Posterior vena cava (tissue), 2 donors: ENCODE measurements at regions of chr7 and their contacts with region 1.

Region 1: DNA sequence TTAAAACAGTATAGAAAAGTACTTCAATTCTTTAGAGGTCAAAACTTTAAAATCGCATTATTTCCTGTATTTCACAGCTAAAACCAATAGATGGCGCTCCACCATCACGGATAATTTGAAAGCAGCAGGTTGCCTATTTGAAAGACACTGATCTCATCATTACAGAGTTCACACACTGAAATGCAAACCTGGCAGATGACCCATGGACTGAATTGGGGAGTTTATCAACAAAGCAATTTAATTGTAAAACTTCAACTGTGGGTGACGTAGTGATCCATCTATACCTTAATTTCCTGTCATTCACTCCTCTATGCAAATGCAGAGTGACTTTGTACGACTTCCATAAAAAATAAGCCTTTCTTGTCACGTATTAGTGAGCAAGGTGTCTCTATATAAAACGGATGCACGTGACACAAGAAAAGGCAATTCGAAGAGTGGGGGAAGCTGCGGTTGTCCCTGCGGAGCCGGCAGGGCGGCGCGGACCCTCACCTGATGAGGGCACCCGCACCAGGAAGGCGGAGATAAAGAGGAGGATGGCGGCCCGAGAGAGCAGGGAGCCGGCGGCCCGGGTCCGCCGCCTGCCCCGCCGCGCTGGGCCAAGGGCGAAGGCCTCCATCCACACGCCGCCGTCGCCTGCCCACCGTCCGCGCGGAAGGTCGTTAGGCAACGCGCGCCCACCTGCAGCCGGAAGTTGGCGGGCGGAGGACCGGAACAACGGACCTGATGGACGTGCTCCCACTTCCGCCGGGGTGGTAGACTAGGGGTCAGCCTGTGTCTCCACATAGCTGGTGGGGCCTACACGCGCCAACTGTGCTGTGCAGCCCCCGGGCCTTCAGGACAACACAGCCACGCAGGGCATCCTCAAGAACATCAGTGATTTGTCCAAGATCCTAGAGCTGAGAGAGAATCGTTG is at the start of gene ZPBP:
- DNase-seq: peak; percentile 76
- total RNA-seq, gene ZPBP: not detected

Region 2: DNA sequence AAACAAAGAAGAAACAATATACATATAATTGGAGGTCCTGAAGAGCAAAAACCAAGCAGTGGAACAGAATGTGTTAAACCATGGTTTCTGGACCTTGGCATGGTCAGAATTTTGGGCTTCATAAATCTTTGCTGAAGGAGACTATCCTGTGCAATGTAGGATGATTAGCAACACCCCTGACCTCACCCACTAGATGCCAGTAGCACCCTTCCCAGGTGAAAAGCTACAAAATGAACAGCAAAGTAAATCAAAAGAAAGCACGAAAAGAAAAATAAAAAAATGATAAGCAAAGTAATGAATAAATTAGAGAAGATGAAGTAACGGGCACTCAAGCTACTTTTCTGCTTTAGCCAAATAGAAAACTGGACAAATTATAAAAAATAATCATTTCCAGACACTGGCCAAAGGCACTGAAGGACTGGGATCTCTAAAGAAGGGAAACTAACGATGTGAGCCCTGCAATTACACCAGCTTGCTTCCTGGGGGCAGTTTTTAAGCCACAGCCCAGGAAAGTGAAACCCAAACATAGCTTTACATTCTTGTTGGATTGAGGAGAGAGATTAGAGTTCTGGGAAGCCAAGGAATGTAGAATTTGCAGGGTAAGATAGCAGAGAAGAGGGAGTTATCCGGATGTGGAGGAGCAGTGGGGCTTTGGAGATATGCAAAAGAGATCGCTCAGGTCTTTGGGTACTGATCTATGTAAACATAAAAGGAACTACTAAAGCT is 19.6 kb after region 1 on chr7:
- intact Hi-C with region 1: no loop called
- DNase-seq: no peak

Region 3: DNA sequence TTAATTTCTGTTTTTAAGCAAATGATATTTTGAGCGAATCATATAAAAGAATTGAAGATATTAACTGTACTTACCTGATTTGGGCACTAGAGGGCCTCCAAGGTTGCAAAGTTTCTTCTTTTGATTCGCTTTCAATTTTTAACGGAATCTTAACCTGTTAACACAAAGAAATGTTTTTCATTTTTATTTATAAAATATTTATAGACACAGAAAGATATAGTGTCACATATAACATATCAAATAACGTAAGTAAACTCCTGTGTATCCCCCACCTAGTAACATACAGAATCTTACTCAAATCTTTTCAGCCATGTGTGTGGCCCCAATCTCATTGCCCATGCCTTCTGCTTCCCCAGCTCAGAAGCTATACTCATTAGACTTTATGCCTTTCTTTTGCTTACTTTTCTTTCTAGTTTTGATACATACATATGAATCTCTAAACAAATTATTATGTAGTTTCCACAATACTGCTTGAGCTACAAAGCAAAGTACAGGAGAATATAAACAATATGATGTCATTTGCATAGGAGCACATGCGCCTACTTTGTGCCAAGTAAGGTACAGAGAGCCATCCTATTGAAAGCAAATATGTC is 49.7 kb after region 1 on chr7:
- intact Hi-C with region 1: no loop called
- DNase-seq: no peak

Region 4: DNA sequence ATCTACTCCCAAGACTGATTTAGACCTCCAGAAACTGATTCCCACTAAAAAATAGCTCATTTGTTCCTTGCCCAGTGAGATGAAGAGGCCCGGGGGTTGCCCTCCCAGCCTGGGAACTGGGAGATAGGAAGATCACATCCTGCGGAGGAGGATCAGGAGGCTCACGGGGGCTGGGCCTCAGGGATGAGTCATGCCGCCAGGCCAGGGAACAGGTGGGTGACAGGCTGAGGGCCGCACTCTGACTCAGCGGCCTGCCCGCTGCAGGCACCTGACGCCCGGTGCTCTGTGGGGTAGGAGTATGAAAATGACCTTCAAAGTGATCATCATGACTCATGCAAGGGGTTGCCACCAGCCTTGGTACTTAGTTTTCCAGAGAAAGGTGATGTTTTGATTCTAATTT is 104.7 kb after region 1 on chr7:
- intact Hi-C with region 1: no loop called
- DNase-seq: no peak

Region 5: GRCh38 chr7:51366930-51367613 is 1274.2 kb after region 1 on chr7:
- intact Hi-C with region 1: loop called in 1 of 2 experiments (anchors 5 kb)
- DNase-seq: no peak